Head of caudate nucleus (tissue), 42 donors: ENCODE measurements at regions of chr2 and their contacts with region 1.

Region 1: DNA sequence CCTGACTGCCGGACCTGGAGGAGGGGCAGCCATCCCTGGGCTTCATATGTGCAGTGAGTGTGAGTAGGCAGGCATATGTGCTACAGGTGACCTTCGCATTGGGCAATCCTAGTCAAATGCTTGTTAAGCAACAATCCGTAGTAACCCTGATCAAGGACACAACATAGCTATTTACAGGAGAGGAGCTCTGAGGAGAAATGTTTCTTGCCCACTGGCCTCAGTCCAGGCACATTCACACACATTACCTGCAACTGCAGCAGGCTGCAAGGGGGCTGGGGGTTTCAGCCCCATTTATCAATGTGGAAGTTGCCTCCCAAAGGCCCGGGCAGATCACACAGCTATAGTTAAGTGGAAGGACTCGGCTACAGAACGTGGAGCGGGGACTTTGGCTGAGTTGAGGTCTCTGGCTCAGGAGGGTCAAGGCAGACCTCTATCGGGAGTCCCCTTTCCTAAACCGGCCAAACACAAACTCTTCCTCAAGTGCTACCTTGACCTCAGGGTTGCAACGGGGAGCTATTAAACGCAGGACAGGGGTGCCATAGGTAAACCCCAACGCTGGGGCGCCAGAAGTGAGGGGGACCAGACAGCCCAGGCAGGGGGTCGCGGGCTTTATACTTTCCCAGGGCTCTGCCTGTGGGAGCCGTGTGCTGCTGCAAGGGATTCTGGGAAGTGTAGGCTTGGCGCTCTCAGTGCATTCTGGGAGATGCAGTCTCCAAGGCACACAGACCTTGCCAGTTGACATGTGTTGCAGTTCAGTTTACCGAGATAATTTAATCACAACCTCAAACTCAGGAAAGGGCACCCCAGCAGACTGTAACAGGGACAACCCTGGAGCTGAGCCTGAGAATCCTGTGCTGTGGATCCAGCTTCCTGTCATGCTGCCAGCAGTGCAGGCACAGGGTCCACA is 9.4 kb downstream of the KHK start:
- DNase-seq: peak; percentile 58 to 91 (median 80)

Region 2: DNA sequence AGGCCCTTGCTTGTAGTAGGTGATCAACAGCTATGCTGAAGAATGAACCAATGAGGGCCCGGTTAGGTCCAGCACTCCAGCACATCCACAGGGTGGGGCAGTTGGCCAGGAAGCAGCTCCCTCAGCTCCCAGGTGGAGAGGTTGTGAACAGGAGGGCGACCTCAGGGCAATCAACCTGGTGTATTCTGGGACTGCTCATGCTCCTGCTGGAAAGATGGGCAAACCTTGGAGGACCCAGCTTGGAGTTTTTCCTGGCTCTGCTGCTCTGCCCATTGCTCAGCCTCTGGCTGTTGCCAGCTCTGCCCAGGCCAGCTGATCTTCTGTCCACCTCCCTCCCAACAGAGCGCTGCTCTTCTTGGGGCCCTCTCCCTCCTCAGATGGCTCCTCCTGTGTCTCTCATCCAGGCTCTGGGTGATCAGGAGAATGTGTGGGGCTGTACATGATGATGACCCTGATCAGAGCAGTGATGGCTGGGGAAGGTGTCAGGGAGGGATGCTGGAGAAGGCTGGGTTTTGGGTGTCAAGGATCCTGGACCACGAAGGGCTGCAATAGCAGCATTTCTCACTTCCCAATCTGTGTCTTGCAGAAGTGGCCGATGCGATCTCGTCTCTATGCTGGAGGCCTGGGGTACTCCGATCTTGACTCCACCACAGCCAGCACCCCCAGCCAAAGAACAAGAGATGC is 56.2 kb after region 1 on chr2:
- intact Hi-C with region 1: no loop called
- DNase-seq: no peak

Region 3: DNA sequence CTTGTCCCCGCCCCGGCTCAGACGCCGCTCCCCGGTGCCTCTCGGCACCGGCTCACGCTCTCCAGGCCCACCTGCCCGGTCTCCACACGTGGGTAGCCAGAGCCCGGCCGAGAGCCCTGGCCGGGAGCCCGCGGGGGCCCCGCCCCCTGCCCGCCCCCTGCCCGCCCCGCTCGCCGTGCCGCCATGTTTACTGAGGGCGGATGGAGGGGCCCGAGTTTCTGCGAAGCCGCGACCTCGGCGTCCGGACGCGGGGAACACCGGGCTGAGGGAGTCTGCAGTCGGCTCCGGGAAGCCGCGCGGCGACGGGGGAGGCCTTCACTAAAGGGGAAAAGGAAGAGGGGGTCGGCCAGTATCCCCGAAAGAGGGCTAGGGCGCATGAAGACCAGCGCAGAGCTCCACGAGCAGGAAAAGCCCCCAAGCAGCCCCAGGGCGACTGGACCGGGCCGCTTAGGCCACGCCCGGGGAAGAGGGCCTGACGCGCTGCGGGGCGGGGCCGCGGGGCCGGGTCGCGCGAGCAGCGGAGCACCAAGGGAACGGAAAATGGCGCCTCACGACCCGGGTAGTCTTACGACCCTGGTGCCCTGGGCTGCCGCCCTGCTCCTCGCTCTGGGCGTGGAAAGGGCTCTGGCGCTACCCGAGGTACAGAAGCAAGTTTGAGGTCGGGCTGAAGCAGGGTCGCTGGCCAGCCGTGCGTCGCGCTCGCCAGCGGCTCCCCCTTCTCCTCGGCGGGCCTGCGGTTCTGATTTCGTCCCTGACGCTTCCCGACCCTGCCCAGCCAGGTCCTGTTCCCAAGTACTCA is 116.0 kb after region 1 on chr2 and contains the starts of genes ATRAID and SLC5A6:
- intact Hi-C with region 1: no loop called
- DNase-seq: peak; percentile 65 to 95 (median 91)

Region 4: DNA sequence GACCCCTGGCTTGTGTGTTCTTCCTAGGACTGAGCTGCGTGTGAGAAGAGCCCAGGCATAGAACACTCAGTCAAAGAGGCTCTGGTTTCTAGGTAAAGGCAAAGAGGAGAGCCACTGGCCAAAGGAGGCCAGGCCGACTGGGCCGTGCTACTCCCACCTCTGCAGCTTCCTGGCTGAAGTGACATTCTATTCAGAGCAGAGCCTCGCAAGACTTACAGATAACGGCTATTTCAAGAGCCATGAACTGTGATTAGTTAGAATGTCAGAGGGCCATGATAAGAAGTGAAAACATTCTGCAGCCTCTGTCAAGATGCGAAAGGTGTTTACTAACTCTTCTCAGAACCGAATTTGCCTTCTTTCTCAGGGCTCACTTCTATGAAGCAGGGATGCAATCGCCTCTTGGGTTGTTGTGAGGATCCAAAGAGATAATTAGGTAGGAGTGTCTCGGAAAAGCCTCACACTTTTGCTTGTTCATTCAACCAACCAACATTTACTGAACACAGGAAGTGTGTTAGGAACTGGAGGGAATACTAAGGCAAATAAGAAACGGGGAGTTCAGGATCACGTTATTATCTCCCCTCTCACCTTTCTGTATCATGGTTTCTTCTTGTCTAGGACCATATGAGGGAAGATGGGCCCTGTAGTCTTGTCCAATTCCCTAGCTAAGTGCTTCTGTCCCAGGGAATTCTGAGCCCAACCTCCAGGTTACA is 175.8 kb after region 1 on chr2:
- intact Hi-C with region 1: no loop called
- DNase-seq: no peak

Region 5: DNA sequence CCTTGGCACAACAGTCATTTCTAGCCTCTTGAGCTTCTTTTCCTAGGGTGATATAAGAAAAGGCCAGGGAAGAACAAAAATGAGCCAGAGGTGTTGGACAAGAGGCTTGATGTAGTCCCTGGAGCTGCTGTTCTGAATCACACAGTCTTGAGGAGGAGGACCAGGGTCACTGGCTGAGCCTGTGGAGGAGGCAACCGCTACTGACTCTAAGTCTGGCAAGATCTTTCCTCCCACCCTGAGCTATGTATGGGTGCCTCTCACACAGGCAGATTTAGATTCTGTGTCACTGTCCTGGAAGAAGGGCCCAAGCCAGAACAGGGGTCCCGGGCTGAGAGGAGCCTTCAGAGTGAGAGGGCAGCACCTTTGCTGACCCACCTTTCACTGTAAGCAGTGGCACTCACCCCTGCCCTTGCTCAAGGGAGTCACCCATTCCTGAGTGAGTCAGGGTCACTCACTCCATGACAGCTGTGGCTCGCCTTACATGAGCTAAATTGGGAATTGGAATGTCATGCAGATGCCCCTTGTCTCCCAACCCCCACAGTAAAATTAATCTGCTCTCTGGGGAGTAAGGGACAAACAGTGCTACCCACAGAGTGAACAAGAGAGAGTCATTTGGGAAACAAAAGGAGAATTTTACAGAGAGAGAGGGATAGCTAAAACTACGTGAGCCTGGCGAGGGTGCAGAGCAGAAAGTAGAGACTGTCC is 186.0 kb after region 1 on chr2 and contains the start of gene TRIM54:
- intact Hi-C with region 1: loop called (anchors 10 kb)
- DNase-seq: peak in 1 of 42 donors; percentile 49